ENCODE measurements at regions of chr3 and their contacts with region 1.

Region 1: GRCh38 chr3:9749645-9750555 is at the start of gene OGG1:
- DNase-seq: peak; percentile 98
- ATAC-seq: peak; percentile 98
- H3K4me3 ChIP-seq: peak within 1 kb of the TSS; percentile 77 to 95 (median 84)
- H3K27ac ChIP-seq: peak within 1 kb of the TSS; percentile 88 to 99 (median 97)
- H3K4me1 ChIP-seq: peaks cover 19 to 23% of the 10 kb centered on the region in 2 donors
- H3K27me3 ChIP-seq: no peaks in the 10 kb centered on the region
- CTCF ChIP-seq: no peak
- POLR2A ChIP-seq: peak; percentile 56 to 74
- total RNA-seq, gene OGG1: 4.1 to 13.3 (median 7.4) TPM

Region 2: DNA sequence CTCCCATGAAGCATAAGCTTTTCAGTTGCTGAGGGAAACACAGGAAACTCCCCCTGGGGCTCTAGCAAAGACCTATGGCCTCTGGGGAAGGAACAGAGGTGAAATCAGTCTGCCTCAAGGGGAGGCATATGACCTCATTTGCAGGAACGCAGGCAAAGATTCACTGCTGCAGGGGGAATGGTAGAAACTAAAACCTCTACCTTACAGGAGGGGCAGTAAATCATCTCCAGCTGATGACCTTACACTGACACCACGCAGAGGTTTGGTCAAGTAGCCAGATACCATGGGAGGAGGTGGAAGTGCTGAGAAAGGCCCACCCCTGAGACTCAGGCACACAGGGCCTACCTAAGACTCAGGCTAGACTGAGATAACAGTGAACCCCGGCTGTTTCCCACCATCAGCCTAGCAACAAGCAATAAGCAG is 867.7 kb before region 1 on chr3:
- in situ Hi-C with region 1: no loop called
- intact Hi-C with region 1: no loop called
- DNase-seq: no peak
- ATAC-seq: no peak
- H3K4me3 ChIP-seq: no peak overlapping the region
- H3K27ac ChIP-seq: no peak overlapping the region
- H3K4me1 ChIP-seq: no peaks in the 10 kb centered on the region
- H3K27me3 ChIP-seq: no peaks in the 10 kb centered on the region
- CTCF ChIP-seq: no peak
- POLR2A ChIP-seq: no peak

Region 3: DNA sequence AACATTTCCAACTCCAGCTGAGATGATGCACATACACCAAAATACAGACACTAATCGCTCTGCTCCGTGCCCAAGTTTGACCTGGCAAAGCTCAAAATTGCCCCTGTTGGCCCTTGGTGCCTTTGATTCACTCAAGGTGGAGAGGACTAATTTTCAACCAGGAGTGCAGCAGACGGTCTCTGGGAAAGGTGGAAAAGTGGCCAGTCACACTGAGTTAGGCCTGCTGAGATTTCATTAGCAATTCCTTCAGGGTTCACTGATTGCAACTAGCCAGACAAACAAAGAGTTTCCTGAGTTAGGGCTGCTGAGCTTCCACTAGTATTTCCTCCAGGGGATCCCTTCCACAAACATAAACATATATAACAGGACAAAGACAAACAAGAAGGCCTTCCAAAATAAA is 167.6 kb before region 1 on chr3:
- in situ Hi-C with region 1: no loop called
- intact Hi-C with region 1: no loop called
- DNase-seq: no peak
- ATAC-seq: no peak
- H3K4me3 ChIP-seq: no peak overlapping the region
- H3K27ac ChIP-seq: no peak overlapping the region
- H3K4me1 ChIP-seq: no peaks in the 10 kb centered on the region
- H3K27me3 ChIP-seq: no peaks in the 10 kb centered on the region
- CTCF ChIP-seq: no peak
- POLR2A ChIP-seq: no peak

Region 4: DNA sequence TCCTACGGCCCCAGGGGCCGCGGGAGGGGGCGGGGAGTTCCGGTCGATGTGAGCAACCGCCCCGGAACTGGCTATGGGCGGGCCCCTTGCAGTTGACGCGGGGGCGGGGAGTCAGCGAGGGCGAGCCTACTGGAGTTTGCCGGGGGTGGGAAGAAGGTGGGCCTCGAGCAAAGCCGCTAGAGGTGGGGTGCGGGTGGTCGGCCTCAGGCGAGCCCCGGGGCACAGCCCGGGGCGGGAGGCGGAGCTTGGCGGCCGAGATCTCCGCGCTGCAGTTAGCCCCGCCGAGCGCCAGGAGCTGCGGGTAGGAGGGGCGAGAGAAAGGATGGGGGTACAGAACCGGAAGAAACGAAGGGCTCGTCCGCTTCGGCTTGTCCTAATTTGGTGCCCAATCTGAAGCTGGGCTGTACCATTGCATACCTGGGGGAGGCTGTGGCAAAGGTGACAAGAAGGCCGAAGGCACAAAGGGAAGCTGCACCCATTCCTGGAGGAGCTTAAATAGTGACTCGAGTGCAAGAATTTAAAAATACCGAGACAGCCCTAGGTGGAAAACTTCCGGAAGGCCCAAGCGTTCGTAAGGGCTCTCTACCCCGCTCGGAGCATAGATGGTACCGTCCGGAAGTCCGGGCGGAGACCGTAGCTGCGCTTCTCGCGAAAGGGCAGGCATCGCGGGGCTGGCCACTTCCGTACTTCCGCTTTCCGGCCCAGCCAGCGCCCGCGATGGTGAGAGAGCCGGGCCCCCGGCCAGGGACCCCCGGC is 42.7 kb after region 1 on chr3 and contains the starts of genes ARPC4 and TADA3:
- in situ Hi-C with region 1: no loop called
- intact Hi-C with region 1: loop called (anchors 1 kb)
- DNase-seq: peak; percentile 87 to 88
- ATAC-seq: peak; percentile 97
- H3K4me3 ChIP-seq: peak within 1 kb of the TSS; percentile 89 to 99 (median 94)
- H3K27ac ChIP-seq: peak within 1 kb of the TSS; percentile 93 to 99 (median 98)
- H3K4me1 ChIP-seq: peaks cover 20 to 27% of the 10 kb centered on the region in 2 donors
- H3K27me3 ChIP-seq: no peaks in the 10 kb centered on the region
- CTCF ChIP-seq: peak in 2 of 5 experiments; percentile 20 to 40
- POLR2A ChIP-seq: peak; percentile 63 to 83
- total RNA-seq, gene ARPC4: 96.8 to 147 (median 143) TPM
- total RNA-seq, gene TADA3: 58.1 to 83.5 (median 66.7) TPM

Measured in gastrocnemius medialis (tissue), 4 donors.